Posterior vena cava (tissue), 2 donors: ENCODE measurements at regions of chr7 and their contacts with region 1.

Region 1: DNA sequence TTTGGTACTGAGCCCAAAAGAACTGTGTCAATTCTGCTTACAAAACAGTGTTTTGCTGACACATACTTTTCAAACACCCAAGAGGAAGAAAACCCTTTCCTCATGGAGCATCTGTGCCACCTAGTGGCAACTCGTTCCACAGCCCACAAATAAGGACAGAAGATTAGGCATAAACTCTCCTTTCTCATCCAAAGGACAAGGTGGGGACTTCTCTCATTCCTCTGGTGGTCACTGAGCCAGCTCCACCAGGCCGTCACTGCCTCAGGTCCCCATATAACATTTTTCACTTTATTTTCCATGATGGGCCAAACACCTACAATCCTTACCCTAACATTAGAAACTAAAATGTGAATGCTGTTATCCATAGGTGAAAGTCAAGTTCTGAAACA is 76.9 kb downstream of the RNF216 start:
- DNase-seq: peak; percentile 91

Region 2: GRCh38 chr7:5494683-5495561 is 209.6 kb before region 1 on chr7:
- intact Hi-C with region 1: loop called in 1 of 2 experiments (anchors 10 kb)
- DNase-seq: peak; percentile 91

Region 3: DNA sequence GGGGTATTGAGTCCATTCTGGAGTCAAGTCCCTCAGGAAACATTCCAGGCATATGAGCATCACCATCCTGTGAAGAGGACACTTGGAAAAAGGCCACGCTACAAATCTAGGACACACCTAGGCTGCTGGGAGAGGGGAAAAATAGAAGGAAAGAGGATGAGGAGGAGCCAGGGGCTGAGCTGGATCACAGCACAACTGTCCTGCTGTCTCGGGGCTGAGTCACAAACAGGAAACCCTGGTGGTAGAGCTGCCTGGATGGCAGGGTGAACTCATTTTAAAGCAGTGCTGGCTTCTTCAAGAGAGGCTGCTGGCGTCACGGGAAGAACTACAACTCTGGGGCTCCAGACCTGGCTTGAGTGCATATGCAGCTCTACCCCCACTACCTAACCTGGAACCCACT is 74.6 kb before region 1 on chr7:
- intact Hi-C with region 1: loop called in 1 of 2 experiments (anchors 10 kb)
- DNase-seq: peak; percentile 80

Region 4: GRCh38 chr7:5665094-5666025 is 39.2 kb before region 1 on chr7:
- intact Hi-C with region 1: loop called in 1 of 2 experiments (anchors 5 kb)
- DNase-seq: peak; percentile 81